ENCODE measurements at regions of chr3 and their contacts with region 1.

Region 1: GRCh38 chr3:183468424-183468823 is 40.0 kb upstream of the MCF2L2 start:
- DNase-seq: no peak
- H3K4me3 ChIP-seq: no peak overlapping the region
- H3K4me3 Mint-ChIP-seq: no peak overlapping the region
- H3K27ac ChIP-seq: no peak overlapping the region
- H3K27ac Mint-ChIP-seq: no peak overlapping the region
- H3K4me1 ChIP-seq: peaks cover 8% of the 10 kb centered on the region
- H3K4me1 Mint-ChIP-seq: peaks cover 2 to 8% (median 5%) of the 10 kb centered on the region in 3 donors
- H3K27me3 ChIP-seq: no peaks in the 10 kb centered on the region
- H3K27me3 Mint-ChIP-seq: peaks cover 4 to 9% of the 10 kb centered on the region in 2 donors

Region 2: DNA sequence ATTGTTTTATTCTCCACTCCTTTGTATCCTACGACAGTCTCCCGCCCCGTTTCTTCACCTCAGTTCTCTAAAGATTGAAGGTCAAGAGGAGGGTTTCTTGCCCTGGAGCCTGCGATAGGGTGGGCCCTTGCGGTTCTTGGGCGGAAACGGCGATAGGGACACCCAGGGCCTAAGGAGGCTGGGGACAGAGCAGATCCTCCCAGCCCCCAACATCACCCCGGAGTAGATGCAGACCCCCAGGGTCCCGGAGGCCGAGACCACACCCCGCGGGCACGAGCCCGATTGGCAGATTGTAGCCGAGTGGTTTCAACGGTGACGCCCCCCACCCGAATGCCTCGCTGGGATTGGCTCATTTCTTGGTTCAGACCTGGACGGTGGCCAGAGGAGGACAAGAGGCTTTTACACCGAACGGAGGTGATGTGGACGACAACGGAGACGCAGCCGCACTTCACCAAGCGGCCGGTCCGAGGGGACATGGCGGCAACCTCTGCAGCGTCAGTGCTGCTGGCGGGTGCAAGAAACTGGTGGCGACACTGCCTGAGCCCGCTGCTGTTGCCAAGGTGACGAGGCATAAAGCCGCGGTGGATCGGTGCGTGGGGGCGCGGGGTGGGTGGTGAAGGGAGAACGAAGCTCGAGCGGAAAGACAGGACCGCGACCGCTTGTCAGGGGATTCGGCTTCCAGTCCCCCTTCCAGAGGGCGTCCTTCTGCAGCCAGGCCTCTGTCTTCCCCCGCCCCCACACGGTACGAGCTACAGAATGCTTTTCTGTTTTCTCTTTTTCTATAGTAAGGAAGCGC is 21.0 kb before region 1 on chr3:
- CTCF ChIA-PET with region 1: no interaction called
- POLR2A ChIA-PET with region 1: no interaction called
- DNase-seq: peak; percentile 40 to 79 (median 61)
- H3K4me3 ChIP-seq: peak overlapping the region; percentile 85
- H3K4me3 Mint-ChIP-seq: peak overlapping the region; percentile 90 to 98 (median 96)
- H3K27ac ChIP-seq: peak overlapping the region; percentile 83
- H3K27ac Mint-ChIP-seq: peak overlapping the region; percentile 23 to 97 (median 83)
- H3K4me1 ChIP-seq: peaks cover 9% of the 10 kb centered on the region
- H3K4me1 Mint-ChIP-seq: peaks cover 20 to 27% (median 21%) of the 10 kb centered on the region in 3 donors
- H3K27me3 ChIP-seq: no peaks in the 10 kb centered on the region
- H3K27me3 Mint-ChIP-seq: peaks cover 0 to 2% of the 10 kb centered on the region in 2 donors

Region 3: DNA sequence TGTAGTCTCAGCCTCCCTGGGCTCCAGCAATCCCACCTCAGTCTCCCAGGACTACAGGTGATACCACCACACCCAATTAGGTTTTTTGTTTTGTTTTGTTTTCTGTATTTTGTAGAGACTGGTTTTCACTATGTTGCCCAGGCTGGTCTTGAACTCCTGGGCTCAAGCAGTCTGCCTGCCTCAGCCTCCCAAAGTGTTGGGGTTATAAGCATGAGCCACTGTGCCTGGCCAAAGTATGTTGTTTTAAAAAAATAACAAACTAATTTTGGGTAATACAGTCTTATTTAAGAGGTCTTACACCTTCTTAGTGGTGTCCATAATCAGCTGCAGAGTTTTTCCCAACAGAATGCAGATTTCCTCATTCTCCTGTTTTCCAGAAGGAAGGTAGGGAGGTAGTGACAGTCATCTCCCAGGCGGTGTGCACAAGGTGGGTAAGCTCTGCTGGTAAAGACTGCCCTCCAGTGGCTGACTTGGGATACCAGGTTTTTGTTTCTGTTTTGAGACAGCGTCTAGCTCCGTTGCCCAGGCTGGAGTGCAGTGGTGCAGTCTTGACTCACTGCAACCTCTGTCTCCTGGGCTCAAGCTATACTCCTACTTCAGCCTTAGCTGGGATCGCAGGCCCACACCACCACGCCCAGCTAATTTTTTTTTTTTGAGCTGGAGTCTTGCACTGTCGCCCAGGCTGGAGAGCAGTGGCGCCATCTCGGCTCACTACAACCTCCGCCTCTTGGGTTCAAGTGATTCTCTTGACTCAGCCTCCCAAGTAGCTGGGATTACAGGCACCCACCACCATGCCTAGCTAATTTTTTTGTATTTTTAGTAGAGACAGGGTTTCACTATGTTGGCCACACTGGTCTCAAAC is 298.6 kb after region 1 on chr3:
- CTCF ChIA-PET with region 1: interaction called, 24 read pairs
- POLR2A ChIA-PET with region 1: no interaction called
- DNase-seq: peak; percentile 52 to 77 (median 57)
- H3K4me3 ChIP-seq: no peak overlapping the region
- H3K4me3 Mint-ChIP-seq: no peak overlapping the region
- H3K27ac ChIP-seq: no peak overlapping the region
- H3K27ac Mint-ChIP-seq: peak overlapping the region in 5 of 8 donors; percentile 15 to 81 (median 40)
- H3K4me1 ChIP-seq: no peaks in the 10 kb centered on the region
- H3K4me1 Mint-ChIP-seq: peaks cover 9 to 15% (median 12%) of the 10 kb centered on the region in 3 donors
- H3K27me3 ChIP-seq: no peaks in the 10 kb centered on the region
- H3K27me3 Mint-ChIP-seq: no peaks in the 10 kb centered on the region

Measured in CD8-positive, alpha-beta memory T cell (primary cell).